HepG2 (cell line): ENCODE measurements at regions of chr5 and their contacts with region 1.

Region 1: GRCh38 chr5:73471654-73472053 is 23.1 kb upstream of the FOXD1 start:
- DNase-seq: no peak
- ATAC-seq: no peak
- H3K4me3 ChIP-seq: no peak overlapping the region
- H3K27ac ChIP-seq: no peak overlapping the region
- H3K4me1 ChIP-seq: no peaks in the 10 kb centered on the region
- H3K27me3 ChIP-seq: peaks cover 0 to 15% of the 10 kb centered on the region in 2 experiments; a peak in 1 of 5 replicates
- CTCF ChIP-seq: no peak
- EP300 ChIP-seq: no peak
- POLR2A ChIP-seq: no peak
- RAD21 ChIP-seq: no peak

Region 2: DNA sequence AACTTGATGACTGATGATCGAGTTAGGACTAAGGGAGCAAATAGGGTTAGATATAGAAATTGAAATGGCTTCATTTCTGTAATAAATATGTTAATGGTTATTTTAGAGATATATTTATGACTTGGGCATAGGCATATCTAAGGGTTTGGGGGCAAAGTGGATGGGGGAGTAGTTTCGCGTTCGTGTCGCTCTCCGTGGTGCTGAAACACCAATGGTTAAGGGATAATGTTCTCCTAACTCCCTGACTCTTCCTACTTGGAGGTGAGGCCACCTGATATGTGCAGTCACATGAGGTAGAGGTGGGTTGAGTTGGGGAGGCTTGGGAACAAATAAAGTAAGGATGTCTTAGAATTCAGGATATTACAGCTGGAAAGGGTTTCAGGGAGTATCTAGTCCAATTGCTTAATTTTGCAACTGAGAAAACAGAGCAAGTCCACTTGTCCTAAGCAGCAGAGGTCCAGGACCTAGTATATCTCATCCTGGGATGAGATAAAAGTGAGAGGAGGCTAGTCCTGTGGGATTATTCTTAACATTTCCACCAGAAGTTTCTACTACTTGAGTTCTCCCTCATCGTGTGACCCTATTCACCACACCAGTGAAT is 1408.3 kb before region 1 on chr5:
- CTCF ChIA-PET with region 1: no interaction called
- POLR2A ChIA-PET with region 1: no interaction called
- in situ Hi-C with region 1: no loop called
- intact Hi-C with region 1: loop called (anchors 10 kb)
- DNase-seq: peak; percentile 14
- ATAC-seq: no peak
- H3K4me3 ChIP-seq: no peak overlapping the region
- H3K27ac ChIP-seq: no peak overlapping the region
- H3K4me1 ChIP-seq: no peaks in the 10 kb centered on the region
- H3K27me3 ChIP-seq: no peaks in the 10 kb centered on the region; a peak in 1 of 5 replicates
- CTCF ChIP-seq: no peak
- EP300 ChIP-seq: no peak
- POLR2A ChIP-seq: no peak
- RAD21 ChIP-seq: no peak

Region 3: DNA sequence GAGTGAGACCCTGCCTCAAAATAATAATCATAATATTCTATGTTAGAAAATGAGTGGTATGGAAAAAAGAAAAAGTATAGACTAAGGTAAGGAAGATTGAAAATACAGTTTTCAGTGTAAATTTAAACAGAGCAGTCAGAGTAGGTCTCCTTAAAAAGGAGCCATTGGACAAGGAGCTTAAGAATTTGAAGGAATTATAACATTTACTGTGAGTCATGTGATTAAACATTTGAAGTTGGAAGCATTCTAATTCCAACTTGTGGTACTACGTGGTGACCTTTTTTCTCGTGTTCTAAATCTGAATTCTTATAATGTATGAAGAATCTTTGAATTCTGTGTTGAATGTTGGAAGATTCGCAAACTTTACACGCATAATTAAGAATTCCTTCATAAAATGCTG is 390.6 kb before region 1 on chr5:
- CTCF ChIA-PET with region 1: no interaction called
- POLR2A ChIA-PET with region 1: no interaction called
- in situ Hi-C with region 1: no loop called
- intact Hi-C with region 1: no loop called
- DNase-seq: no peak
- ATAC-seq: no peak
- H3K4me3 ChIP-seq: no peak overlapping the region
- H3K27ac ChIP-seq: no peak overlapping the region
- H3K4me1 ChIP-seq: no peaks in the 10 kb centered on the region
- H3K27me3 ChIP-seq: no peaks in the 10 kb centered on the region
- CTCF ChIP-seq: no peak
- EP300 ChIP-seq: no peak
- POLR2A ChIP-seq: no peak
- RAD21 ChIP-seq: no peak

Region 4: GRCh38 chr5:73540192-73540591 is 68.5 kb after region 1 on chr5:
- CTCF ChIA-PET with region 1: no interaction called
- POLR2A ChIA-PET with region 1: no interaction called
- in situ Hi-C with region 1: no loop called
- intact Hi-C with region 1: no loop called
- DNase-seq: peak; percentile 50
- ATAC-seq: no peak
- H3K4me3 ChIP-seq: no peak overlapping the region
- H3K27ac ChIP-seq: no peak overlapping the region
- H3K4me1 ChIP-seq: peaks cover 67% of the 10 kb centered on the region
- H3K27me3 ChIP-seq: no peaks in the 10 kb centered on the region
- CTCF ChIP-seq: no peak
- EP300 ChIP-seq: no peak
- POLR2A ChIP-seq: no peak
- RAD21 ChIP-seq: no peak